Caco-2 (cell line): ENCODE measurements at regions of chr1 and their contacts with region 1.

Region 1: GRCh38 chr1:146036965-146037646 is 15.6 kb upstream of the HJV start:
- DNase-seq: peak; percentile 84 to 90
- H3K4me3 ChIP-seq: peak overlapping the region; percentile 82
- H3K4me3 Mint-ChIP-seq: peak overlapping the region; percentile 92
- H3K27ac Mint-ChIP-seq: peak overlapping the region; percentile 100
- H3K4me1 ChIP-seq: 0 out of 2 replicates have a peak, but pooled peaks cover 3% of the 10 kb centered on the region
- H3K4me1 Mint-ChIP-seq: peaks cover 13% of the 10 kb centered on the region
- H3K27me3 ChIP-seq: no peaks in the 10 kb centered on the region
- H3K27me3 Mint-ChIP-seq: peaks cover 8% of the 10 kb centered on the region
- CTCF ChIP-seq: no peak

Region 2: DNA sequence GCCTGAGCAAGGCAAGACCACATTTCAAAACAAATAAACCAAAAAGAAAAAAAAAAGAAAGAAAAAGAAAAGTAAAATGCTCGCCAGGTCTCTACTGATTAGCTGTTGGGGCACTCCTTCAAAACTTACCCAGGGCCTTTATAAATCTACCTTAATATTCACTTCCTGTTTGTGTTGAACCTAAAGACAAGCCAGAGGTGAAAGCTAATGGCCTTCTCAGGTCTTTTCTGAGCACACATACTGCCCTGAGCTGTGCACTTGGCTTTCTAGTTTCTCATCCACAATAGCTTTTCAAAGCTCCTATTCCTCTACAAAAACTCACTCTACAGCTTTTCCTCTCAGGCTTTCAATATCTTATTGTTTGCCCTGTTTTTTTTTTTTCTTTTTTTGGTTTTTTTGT is 263.7 kb before region 1 on chr1:
- CTCF ChIA-PET with region 1: no interaction called
- POLR2A ChIA-PET with region 1: no interaction called
- intact Hi-C with region 1: no loop called
- DNase-seq: no peak
- H3K4me3 ChIP-seq: no peak overlapping the region
- H3K4me3 Mint-ChIP-seq: no peak overlapping the region
- H3K27ac Mint-ChIP-seq: peak overlapping the region; percentile 83
- H3K4me1 ChIP-seq: no peaks in the 10 kb centered on the region
- H3K4me1 Mint-ChIP-seq: peaks cover 11% of the 10 kb centered on the region
- H3K27me3 ChIP-seq: no peaks in the 10 kb centered on the region
- H3K27me3 Mint-ChIP-seq: no peaks in the 10 kb centered on the region
- CTCF ChIP-seq: no peak

Region 3: GRCh38 chr1:146007506-146008133 is 29.5 kb before region 1 on chr1:
- CTCF ChIA-PET with region 1: interaction called, 3 read pairs
- POLR2A ChIA-PET with region 1: no interaction called
- intact Hi-C with region 1: loop called (anchors 1 kb)
- DNase-seq: no peak
- H3K4me3 ChIP-seq: no peak overlapping the region
- H3K4me3 Mint-ChIP-seq: no peak overlapping the region
- H3K27ac Mint-ChIP-seq: no peak overlapping the region
- H3K4me1 ChIP-seq: 0 out of 2 replicates have a peak, but pooled peaks cover 3% of the 10 kb centered on the region
- H3K4me1 Mint-ChIP-seq: peaks cover 5% of the 10 kb centered on the region
- H3K27me3 ChIP-seq: no peaks in the 10 kb centered on the region
- H3K27me3 Mint-ChIP-seq: no peaks in the 10 kb centered on the region
- CTCF ChIP-seq: no peak

Region 4: DNA sequence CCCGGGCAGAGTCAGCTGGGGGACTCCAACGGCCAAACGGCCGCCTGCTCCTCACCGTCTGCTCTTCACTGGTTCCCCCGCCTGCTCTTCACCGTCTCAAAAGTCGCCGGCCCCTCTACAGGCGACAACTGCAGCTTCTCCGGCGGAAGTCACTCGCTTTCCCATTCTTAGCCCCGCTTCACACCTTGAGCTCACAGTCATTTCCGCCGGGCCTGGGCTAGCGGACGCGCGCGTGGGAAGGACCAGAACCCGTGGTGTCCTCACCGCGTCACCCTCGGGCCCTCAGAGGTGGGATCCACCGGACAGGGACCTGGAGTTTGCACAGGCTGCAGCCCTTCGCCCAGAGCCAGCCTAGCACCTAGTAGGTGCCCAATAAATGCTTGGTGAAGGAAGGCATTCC is 12.3 kb after region 1 on chr1:
- CTCF ChIA-PET with region 1: interaction called, 4 read pairs
- POLR2A ChIA-PET with region 1: interaction called, 88 read pairs
- intact Hi-C with region 1: loop called (anchors 1 kb)
- DNase-seq: no peak
- H3K4me3 ChIP-seq: no peak overlapping the region
- H3K4me3 Mint-ChIP-seq: peak overlapping the region; percentile 22
- H3K27ac Mint-ChIP-seq: peak overlapping the region; percentile 87
- H3K4me1 ChIP-seq: peaks cover 32% of the 10 kb centered on the region
- H3K4me1 Mint-ChIP-seq: peaks cover 21% of the 10 kb centered on the region
- H3K27me3 ChIP-seq: no peaks in the 10 kb centered on the region
- H3K27me3 Mint-ChIP-seq: no peaks in the 10 kb centered on the region
- CTCF ChIP-seq: no peak